ENCODE measurements at regions of chr5 and their contacts with region 1.

Region 1: GRCh38 chr5:150320048-150320555 is 17.4 kb upstream of the ARSI start:
- DNase-seq: peak; percentile 87
- H3K4me3 ChIP-seq: no peak overlapping the region
- H3K27ac ChIP-seq: peak overlapping the region; percentile 92
- H3K4me1 ChIP-seq: peaks cover 64% of the 10 kb centered on the region
- H3K27me3 ChIP-seq: no peaks in the 10 kb centered on the region
- CTCF ChIP-seq: no peak

Region 2: DNA sequence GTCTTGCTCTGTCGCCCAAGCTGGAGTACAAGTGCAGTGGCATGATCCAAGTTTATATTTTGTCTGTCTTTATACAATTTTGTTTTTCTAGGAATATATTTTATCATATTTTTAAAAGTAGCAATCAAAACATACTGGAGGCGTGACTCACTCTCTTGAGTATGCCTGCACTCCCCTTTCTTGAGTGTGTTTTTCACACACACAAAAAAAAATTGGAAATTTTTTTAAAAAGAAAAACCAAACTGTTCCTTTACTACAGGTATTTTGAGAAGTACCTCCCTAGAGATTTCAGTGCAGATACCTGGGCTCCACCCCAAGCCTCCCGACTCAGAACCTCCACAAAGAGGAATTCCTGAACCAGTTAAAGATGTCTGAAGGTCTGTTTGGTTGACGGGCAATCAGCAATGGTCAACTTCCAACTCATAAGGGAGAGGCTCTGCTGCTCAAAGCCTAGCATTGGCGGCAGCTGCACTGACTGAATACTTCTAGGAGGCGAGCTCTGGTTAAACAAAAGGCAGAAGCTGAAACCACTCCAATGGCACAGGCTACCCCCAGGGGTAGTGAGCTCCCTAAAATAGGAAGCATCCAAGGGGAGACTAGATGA is 402.9 kb before region 1 on chr5:
- CTCF ChIA-PET with region 1: no interaction called
- dilution Hi-C with region 1: no loop called
- in situ Hi-C with region 1: no loop called
- intact Hi-C with region 1: no loop called
- DNase-seq: peak; percentile 20
- H3K4me3 ChIP-seq: no peak overlapping the region
- H3K27ac ChIP-seq: no peak overlapping the region
- H3K4me1 ChIP-seq: peaks cover 41% of the 10 kb centered on the region
- H3K27me3 ChIP-seq: no peaks in the 10 kb centered on the region
- CTCF ChIP-seq: no peak

Region 3: GRCh38 chr5:150263801-150264621 is 56.1 kb before region 1 on chr5:
- CTCF ChIA-PET with region 1: no interaction called
- dilution Hi-C with region 1: no loop called
- in situ Hi-C with region 1: no loop called
- intact Hi-C with region 1: loop called (anchors 1 kb)
- DNase-seq: peak; percentile 98
- H3K4me3 ChIP-seq: no peak overlapping the region
- H3K27ac ChIP-seq: no peak overlapping the region
- H3K4me1 ChIP-seq: peaks cover 30% of the 10 kb centered on the region
- H3K27me3 ChIP-seq: no peaks in the 10 kb centered on the region
- CTCF ChIP-seq: no peak

Region 4: DNA sequence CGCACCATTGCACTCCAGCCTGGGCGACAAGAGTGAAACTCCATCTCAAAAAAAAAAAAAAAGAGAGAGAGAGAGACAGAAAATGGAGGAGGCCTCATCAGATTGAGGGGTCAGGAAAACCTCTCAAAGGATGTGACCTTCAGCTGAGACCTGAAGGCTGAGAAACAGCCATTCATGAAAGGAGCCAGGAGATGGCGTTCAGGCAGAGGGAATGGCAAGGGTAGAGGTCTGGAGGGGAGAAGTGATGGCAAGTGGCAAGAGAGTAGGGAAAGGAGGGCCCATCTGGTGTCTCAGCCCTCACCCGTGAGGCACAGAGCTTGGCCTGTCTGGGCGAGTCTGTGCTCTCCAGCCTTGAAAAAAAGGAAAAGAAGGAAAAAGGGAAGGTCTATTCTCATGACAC is 47.6 kb before region 1 on chr5:
- CTCF ChIA-PET with region 1: no interaction called
- dilution Hi-C with region 1: no loop called
- in situ Hi-C with region 1: no loop called
- intact Hi-C with region 1: loop called (anchors 2 kb)
- DNase-seq: peak; percentile 46
- H3K4me3 ChIP-seq: no peak overlapping the region
- H3K27ac ChIP-seq: no peak overlapping the region
- H3K4me1 ChIP-seq: peaks cover 5% of the 10 kb centered on the region
- H3K27me3 ChIP-seq: no peaks in the 10 kb centered on the region
- CTCF ChIP-seq: peak; percentile 53 to 78